ENCODE measurements at regions of chr2 and their contacts with region 1.

Region 1: DNA sequence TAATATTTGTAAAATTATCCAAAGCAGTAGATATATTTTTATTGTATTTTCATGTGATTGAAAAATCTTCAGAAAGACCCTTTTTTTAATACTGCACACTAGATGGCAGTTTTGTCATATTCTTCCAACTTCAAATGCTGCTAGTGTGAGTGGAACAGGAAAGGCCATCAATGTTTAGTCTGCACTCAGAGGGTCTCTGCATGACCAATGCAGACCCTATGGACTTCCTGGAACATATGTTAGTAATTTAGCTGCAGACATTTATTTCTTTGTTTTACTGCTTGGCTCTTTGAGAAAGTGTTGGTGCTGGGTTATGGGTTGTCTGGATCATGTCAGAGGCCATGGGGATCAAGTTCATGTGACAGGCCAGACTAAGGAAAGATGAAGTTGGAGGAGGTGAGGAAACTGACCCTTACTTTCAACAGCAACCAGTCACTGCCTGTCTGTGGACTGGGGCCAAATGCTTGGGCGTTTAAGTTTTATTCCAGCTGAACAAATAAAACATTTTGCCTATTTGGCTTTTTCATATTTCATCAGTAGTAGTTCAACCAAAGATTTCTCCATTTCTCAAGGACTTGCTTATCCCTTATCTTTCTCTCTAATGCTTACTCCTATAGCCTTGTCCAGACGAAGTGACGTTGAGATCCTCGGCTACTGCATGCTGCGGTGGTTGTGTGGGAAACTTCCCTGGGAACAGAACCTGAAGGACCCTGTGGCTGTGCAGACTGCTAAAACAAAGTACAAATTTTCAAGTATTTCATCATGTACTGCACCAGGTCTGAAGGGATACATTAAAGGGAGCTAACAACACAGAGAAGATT is 84.8 kb downstream of the VRK2 start:
- DNase-seq: peak; percentile 15
- ATAC-seq: peak; percentile 64
- H3K4me3 ChIP-seq: no peak overlapping the region
- H3K27ac ChIP-seq: no peak overlapping the region
- H3K4me1 ChIP-seq: no peaks in the 10 kb centered on the region
- H3K27me3 ChIP-seq: no peaks in the 10 kb centered on the region
- CTCF ChIP-seq: peak; percentile 59
- EP300 ChIP-seq: no peak
- POLR2A ChIP-seq: no peak
- RAD21 ChIP-seq: peak; percentile 48; the same call in 1 of the 2 replicates

Region 2: GRCh38 chr2:58072102-58072501 is 59.3 kb before region 1 on chr2:
- CTCF ChIA-PET with region 1: no interaction called
- POLR2A ChIA-PET with region 1: no interaction called
- in situ Hi-C with region 1: no loop called
- intact Hi-C with region 1: no loop called
- DNase-seq: no peak
- ATAC-seq: no peak
- H3K4me3 ChIP-seq: no peak overlapping the region
- H3K27ac ChIP-seq: no peak overlapping the region
- H3K4me1 ChIP-seq: no peaks in the 10 kb centered on the region
- H3K27me3 ChIP-seq: no peaks in the 10 kb centered on the region
- CTCF ChIP-seq: no peak
- EP300 ChIP-seq: no peak
- POLR2A ChIP-seq: no peak
- RAD21 ChIP-seq: no peak

Region 3: DNA sequence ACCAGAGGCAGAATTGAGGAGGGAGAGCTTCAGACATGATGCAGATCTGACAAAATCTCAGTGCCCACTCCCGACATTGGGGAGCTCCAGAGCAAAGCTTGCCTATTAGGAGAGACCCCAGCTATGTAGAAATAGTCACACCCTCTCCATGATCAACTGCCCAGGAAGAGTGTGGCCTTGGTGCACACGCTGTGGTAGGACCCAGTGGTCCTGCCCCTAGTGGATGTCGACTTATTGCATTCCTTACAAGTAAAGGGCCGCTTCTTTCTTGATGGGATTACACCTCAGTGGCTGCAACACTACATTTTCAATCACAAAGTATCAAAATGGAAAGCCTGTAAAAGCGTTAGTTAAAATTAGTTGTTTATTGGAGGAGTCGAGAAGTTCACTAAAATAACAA is 20.6 kb before region 1 on chr2:
- CTCF ChIA-PET with region 1: no interaction called
- POLR2A ChIA-PET with region 1: no interaction called
- in situ Hi-C with region 1: no loop called
- intact Hi-C with region 1: no loop called
- DNase-seq: no peak
- ATAC-seq: peak; percentile 73
- H3K4me3 ChIP-seq: no peak overlapping the region
- H3K27ac ChIP-seq: no peak overlapping the region
- H3K4me1 ChIP-seq: no peaks in the 10 kb centered on the region
- H3K27me3 ChIP-seq: no peaks in the 10 kb centered on the region
- CTCF ChIP-seq: no peak
- EP300 ChIP-seq: no peak
- POLR2A ChIP-seq: no peak
- RAD21 ChIP-seq: no peak

Region 4: DNA sequence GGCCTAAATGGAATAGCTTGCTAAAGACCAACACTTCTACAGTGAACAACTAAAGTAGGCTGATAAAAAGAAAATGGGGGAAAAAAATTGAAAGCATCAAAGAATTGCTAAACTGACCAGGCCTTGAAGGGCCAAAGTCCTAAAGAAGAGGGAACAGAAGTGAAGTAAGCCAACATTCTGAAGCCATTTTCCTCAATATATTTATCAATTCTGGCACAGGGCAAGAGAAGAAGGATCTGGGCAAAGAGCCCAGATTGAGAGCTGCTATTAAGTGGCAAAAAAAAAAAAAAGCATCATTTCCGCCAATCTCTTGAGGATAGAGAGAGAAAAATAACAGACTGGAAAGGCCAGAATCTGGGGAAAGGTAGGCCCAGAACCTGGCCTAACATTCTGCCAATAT is 84.0 kb after region 1 on chr2:
- CTCF ChIA-PET with region 1: no interaction called
- POLR2A ChIA-PET with region 1: no interaction called
- in situ Hi-C with region 1: no loop called
- intact Hi-C with region 1: loop called (anchors 1 kb)
- DNase-seq: no peak
- ATAC-seq: no peak
- H3K4me3 ChIP-seq: no peak overlapping the region
- H3K27ac ChIP-seq: no peak overlapping the region
- H3K4me1 ChIP-seq: peaks cover 6% of the 10 kb centered on the region
- H3K27me3 ChIP-seq: no peaks in the 10 kb centered on the region
- CTCF ChIP-seq: no peak
- EP300 ChIP-seq: no peak
- POLR2A ChIP-seq: no peak
- RAD21 ChIP-seq: no peak

Region 5: DNA sequence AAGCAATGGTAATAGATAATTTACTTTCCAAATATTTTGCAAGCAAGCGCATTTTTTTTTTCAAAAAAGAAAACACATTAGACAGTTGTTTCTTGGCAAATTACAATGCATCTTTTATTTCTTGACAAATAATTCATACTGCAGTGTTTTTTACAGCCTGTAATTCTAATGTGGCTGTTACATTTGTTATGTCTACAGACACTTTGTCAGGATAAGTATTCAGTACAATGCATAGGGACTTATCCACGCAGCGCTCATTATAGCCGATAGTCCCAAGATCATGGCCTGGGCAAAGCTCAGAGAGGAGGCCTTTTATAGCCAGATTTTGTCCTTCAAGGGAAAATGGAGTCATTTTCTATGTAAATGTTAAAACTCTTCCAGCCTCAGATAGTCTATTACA is 232.7 kb after region 1 on chr2:
- CTCF ChIA-PET with region 1: no interaction called
- POLR2A ChIA-PET with region 1: no interaction called
- in situ Hi-C with region 1: no loop called
- intact Hi-C with region 1: loop called (anchors 10 kb)
- DNase-seq: no peak
- ATAC-seq: no peak
- H3K4me3 ChIP-seq: no peak overlapping the region
- H3K27ac ChIP-seq: no peak overlapping the region
- H3K4me1 ChIP-seq: no peaks in the 10 kb centered on the region
- H3K27me3 ChIP-seq: no peaks in the 10 kb centered on the region; a peak in 1 of 5 replicates
- CTCF ChIP-seq: no peak
- EP300 ChIP-seq: no peak
- POLR2A ChIP-seq: no peak
- RAD21 ChIP-seq: no peak